ENCODE measurements at regions of chrX and their contacts with region 1.

Region 1: GRCh38 chrX:7996414-7996813 is 69.2 kb upstream of the PNPLA4 start:
- DNase-seq: peak in 3 of 10 donors; percentile 4 to 11 (median 8)

Region 2: GRCh38 chrX:7462110-7462509 is 534.3 kb before region 1 on chrX:
- intact Hi-C with region 1: no loop called
- DNase-seq: no peak

Region 3: GRCh38 chrX:8815464-8816065 is 819.2 kb after region 1 on chrX:
- intact Hi-C with region 1: loop called (anchors 10 kb)
- DNase-seq: no peak